ENCODE measurements at regions of chr19 and their contacts with region 1.

Region 1: DNA sequence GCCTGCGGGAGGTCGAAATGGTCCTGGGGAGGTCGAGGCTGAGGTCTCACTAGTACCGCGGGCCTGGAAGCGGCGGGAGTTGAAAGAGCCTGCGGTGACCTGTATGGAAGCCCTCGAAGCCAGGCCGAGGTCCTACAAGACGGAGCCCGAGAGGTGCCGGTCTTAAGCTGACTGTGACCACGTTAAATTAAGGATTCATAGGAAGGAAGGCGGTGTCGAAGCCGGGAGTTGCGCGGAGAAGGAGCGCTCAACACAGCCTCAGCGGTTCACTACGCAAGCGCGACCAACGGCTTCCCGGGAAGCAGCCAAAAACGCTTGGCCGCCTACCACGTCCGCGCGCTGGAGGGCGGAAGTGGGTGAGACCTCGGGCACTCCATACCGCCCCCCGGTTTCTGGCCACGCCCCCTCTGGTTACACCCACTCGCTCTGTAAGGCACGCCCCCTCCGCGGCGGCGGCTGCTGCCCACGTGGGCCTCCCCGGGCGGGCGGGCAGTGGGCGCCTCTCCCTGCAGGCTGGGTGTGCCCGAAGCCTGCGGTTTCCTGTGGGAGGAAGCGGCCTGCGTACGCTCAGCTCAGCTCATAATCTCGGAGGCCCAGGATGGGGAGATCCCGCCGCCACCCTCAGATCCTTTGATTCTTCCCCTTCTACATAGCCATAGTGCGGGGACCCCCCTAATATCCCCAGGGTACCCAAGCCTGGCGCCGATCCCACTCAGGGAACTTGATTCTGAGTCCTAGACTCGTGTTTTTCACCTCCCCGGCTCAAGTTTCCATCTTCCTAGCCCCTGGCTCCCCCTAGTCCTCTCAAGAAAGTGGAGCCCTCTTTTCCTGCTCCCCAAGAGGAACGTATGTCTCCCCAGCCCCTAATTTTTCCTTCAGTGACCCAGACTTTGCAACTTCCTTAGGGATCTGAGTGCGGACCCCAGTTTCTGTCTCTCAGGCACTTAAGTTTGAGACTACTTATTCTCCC is 3.4 kb upstream of the EMP3 start:
- DNase-seq: peak; percentile 95 to 98 (median 96)
- ATAC-seq: peak; percentile 80
- H3K4me3 ChIP-seq: peak overlapping the region; percentile 57
- H3K27ac ChIP-seq: peak overlapping the region; percentile 99
- H3K4me1 ChIP-seq: peaks cover 26 to 53% of the 10 kb centered on the region in 2 experiments
- H3K27me3 ChIP-seq: no peaks in the 10 kb centered on the region
- CTCF ChIP-seq: peak; percentile 20 to 37 (median 22); a peak in 4 of 6 replicates
- EP300 ChIP-seq: peak; percentile 64
- POLR2A ChIP-seq: peak; percentile 95
- RAD21 ChIP-seq: 0 out of 4 replicates have a peak, but pooled peaks of 1 of the 2 experiments have one; percentile 21

Region 2: GRCh38 chr19:48230555-48231129 is 91.3 kb before region 1 on chr19:
- CTCF ChIA-PET with region 1: no interaction called
- POLR2A ChIA-PET with region 1: no interaction called
- in situ Hi-C with region 1: no loop called
- intact Hi-C with region 1: no loop called
- DNase-seq: peak in 3 of 4 experiments; percentile 14 to 22 (median 17)
- ATAC-seq: no peak
- H3K4me3 ChIP-seq: no peak overlapping the region
- H3K27ac ChIP-seq: no peak overlapping the region
- H3K4me1 ChIP-seq: no peaks in the 10 kb centered on the region
- H3K27me3 ChIP-seq: no peaks in the 10 kb centered on the region
- CTCF ChIP-seq: no peak
- EP300 ChIP-seq: no peak
- POLR2A ChIP-seq: no peak
- RAD21 ChIP-seq: no peak

Region 3: DNA sequence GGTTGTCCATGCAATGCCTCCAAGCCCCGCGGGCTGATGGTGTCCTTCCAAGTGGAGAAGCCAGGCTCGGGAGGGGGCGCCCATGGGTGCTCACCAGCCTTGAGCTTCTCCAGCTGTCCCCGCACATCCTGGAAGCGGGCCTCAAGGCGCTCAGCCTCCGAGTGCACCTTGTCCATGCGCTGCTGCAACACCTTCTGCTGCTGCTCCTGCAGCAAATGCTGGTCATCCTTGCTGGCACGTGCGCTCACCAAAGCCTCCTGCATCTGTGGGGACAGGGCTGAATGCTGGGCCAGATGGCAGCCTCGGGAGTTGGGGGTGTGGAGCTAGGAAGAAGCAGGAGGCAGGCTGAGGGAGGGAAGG is 19.3 kb before region 1 on chr19:
- CTCF ChIA-PET with region 1: no interaction called
- POLR2A ChIA-PET with region 1: no interaction called
- in situ Hi-C with region 1: no loop called
- intact Hi-C with region 1: no loop called
- DNase-seq: no peak
- ATAC-seq: no peak
- H3K4me3 ChIP-seq: no peak overlapping the region
- H3K27ac ChIP-seq: no peak overlapping the region
- H3K4me1 ChIP-seq: peaks cover 0 to 17% of the 10 kb centered on the region in 2 experiments; a peak in 1 of 5 replicates
- H3K27me3 ChIP-seq: peaks cover 12 to 27% of the 10 kb centered on the region in 2 experiments; a peak in 4 of 5 replicates
- CTCF ChIP-seq: no peak
- EP300 ChIP-seq: no peak
- POLR2A ChIP-seq: no peak
- RAD21 ChIP-seq: no peak

Region 4: GRCh38 chr19:48333467-48334384 is 11.8 kb after region 1 on chr19:
- CTCF ChIA-PET with region 1: interaction called, 57 read pairs
- POLR2A ChIA-PET with region 1: interaction called, 16 read pairs
- in situ Hi-C with region 1: no loop called
- intact Hi-C with region 1: loop called (anchors 1 kb)
- DNase-seq: peak; percentile 92 to 97 (median 94)
- ATAC-seq: peak; percentile 89
- H3K4me3 ChIP-seq: peak overlapping the region; percentile 50
- H3K27ac ChIP-seq: peak overlapping the region; percentile 91
- H3K4me1 ChIP-seq: peaks cover 21 to 61% of the 10 kb centered on the region in 2 experiments
- H3K27me3 ChIP-seq: no peaks in the 10 kb centered on the region
- CTCF ChIP-seq: peak; percentile 78 to 99 (median 98)
- EP300 ChIP-seq: no peak
- POLR2A ChIP-seq: peak; percentile 70
- RAD21 ChIP-seq: peak; percentile 98 to 99

Region 5: GRCh38 chr19:48363810-48364563 is 42.1 kb after region 1 on chr19 and contains the starts of genes SYNGR4 and TMEM143:
- CTCF ChIA-PET with region 1: no interaction called
- POLR2A ChIA-PET with region 1: interaction called, 9 read pairs
- in situ Hi-C with region 1: no loop called
- intact Hi-C with region 1: loop called (anchors 5 kb)
- DNase-seq: peak; percentile 98 to 100 (median 99)
- ATAC-seq: peak; percentile 95
- H3K4me3 ChIP-seq: peak within 1 kb of the TSS; percentile 52
- H3K27ac ChIP-seq: peak within 1 kb of the TSS; percentile 96
- H3K4me1 ChIP-seq: peaks cover 8 to 29% of the 10 kb centered on the region in 2 experiments
- H3K27me3 ChIP-seq: no peaks in the 10 kb centered on the region
- CTCF ChIP-seq: peak in 1 of 3 experiments; percentile 12; a peak in 1 of 6 replicates
- EP300 ChIP-seq: peak; percentile 63; the same call in 1 of the 2 replicates
- POLR2A ChIP-seq: 0 out of 2 replicates have a peak, but pooled peaks have one; percentile 13
- RAD21 ChIP-seq: no peak
- polyA plus RNA-seq, gene SYNGR4: 0.14 TPM in 1 of 2 experiments, not detected in the other
- polyA plus RNA-seq, gene TMEM143: 0.66 to 0.67 TPM

Region 6: GRCh38 chr19:48391107-48391986 is 69.4 kb after region 1 on chr19 and contains the start of gene KDELR1:
- CTCF ChIA-PET with region 1: no interaction called
- POLR2A ChIA-PET with region 1: no interaction called
- in situ Hi-C with region 1: no loop called
- intact Hi-C with region 1: loop called (anchors 10 kb)
- DNase-seq: peak; percentile 78 to 92 (median 90)
- ATAC-seq: peak; percentile 83
- H3K4me3 ChIP-seq: peak within 1 kb of the TSS; percentile 88
- H3K27ac ChIP-seq: peak within 1 kb of the TSS; percentile 92
- H3K4me1 ChIP-seq: peaks cover 13 to 63% of the 10 kb centered on the region in 2 experiments; a peak in 4 of 5 replicates
- H3K27me3 ChIP-seq: no peaks in the 10 kb centered on the region
- CTCF ChIP-seq: peak; percentile 95 to 97 (median 96)
- EP300 ChIP-seq: no peak
- POLR2A ChIP-seq: peak; percentile 79
- RAD21 ChIP-seq: peak; percentile 19; a peak in 3 of 4 replicates
- polyA plus RNA-seq, gene KDELR1: 6.1 to 11.1 TPM

Region 7: DNA sequence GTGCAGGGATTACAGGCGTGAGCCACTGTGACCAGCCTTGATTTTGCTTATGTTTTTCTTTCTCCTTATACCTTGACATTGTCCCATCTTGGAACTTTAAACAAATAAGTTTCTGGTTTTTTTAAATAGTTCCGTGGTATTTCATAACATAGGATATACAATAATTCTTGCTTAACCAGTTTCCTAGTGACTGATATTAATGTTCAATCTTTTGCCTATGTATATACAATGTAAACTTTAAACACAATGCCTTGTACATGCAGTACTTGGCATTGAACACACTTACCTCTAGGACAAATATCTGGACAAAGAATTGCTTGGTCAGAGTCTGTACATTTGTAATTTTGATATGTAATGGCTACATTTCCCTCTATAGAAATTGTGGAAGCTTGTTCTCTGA is 260.3 kb after region 1 on chr19:
- CTCF ChIA-PET with region 1: no interaction called
- POLR2A ChIA-PET with region 1: interaction called, 3 read pairs
- in situ Hi-C with region 1: loop called (anchors 5 kb)
- intact Hi-C with region 1: loop called (anchors 5 kb)
- DNase-seq: no peak
- ATAC-seq: no peak
- H3K4me3 ChIP-seq: no peak overlapping the region
- H3K27ac ChIP-seq: no peak overlapping the region
- H3K4me1 ChIP-seq: peaks cover 3 to 8% of the 10 kb centered on the region in 2 experiments; a peak in 1 of 5 replicates
- H3K27me3 ChIP-seq: no peaks in the 10 kb centered on the region
- CTCF ChIP-seq: no peak
- EP300 ChIP-seq: no peak
- POLR2A ChIP-seq: no peak
- RAD21 ChIP-seq: no peak

Measured in K562 (cell line).